Activated naive CD4-positive, alpha-beta T cell treated with anti-CD3 and anti-CD28 coated beads, Interleukin-2, amount 10 ng/mL, durations not matched to agents 7 days and 5 days (primary cell): ENCODE measurements at regions of chr3 and their contacts with region 1.

Region 1: DNA sequence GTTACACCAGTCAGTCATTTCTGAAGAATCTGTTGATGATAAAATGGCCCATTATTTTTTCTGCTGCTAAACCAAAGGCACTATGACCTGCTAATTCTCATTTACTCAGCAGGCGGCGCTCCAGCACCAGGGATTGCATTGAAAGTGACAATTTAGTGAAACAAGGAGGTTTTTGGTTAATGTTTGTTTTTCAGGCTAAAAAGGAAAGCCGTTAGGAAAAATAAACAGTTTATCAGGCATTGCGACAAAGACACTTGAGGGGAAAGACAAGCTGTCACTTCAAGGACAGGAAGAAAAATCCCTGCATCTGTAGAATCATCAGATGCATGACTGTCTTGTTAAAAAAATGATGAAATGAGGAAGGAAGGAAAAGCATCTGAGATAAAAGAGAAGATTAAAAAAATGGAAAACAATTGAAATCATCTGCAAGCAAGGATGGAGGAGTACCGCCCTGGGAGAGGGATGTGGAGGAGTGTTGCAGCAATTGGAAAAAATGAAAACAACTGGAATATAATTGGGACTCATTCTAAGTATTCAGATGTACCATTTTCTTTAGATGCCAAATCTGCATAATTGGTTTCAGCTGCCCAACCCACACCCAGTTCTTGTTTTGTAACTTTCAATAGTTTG is 54.0 kb downstream of the NR1D2 start:
- DNase-seq: peak; percentile 77
- H3K4me3 Mint-ChIP-seq: no peak overlapping the region
- H3K27ac Mint-ChIP-seq: no peak overlapping the region
- H3K4me1 Mint-ChIP-seq: no peaks in the 10 kb centered on the region
- H3K27me3 Mint-ChIP-seq: peaks cover 19% of the 10 kb centered on the region

Region 2: GRCh38 chr3:24088782-24089181 is 89.7 kb after region 1 on chr3:
- CTCF ChIA-PET with region 1: no interaction called
- DNase-seq: no peak
- H3K4me3 Mint-ChIP-seq: no peak overlapping the region
- H3K27ac Mint-ChIP-seq: no peak overlapping the region
- H3K4me1 Mint-ChIP-seq: no peaks in the 10 kb centered on the region
- H3K27me3 Mint-ChIP-seq: no peaks in the 10 kb centered on the region

Region 3: DNA sequence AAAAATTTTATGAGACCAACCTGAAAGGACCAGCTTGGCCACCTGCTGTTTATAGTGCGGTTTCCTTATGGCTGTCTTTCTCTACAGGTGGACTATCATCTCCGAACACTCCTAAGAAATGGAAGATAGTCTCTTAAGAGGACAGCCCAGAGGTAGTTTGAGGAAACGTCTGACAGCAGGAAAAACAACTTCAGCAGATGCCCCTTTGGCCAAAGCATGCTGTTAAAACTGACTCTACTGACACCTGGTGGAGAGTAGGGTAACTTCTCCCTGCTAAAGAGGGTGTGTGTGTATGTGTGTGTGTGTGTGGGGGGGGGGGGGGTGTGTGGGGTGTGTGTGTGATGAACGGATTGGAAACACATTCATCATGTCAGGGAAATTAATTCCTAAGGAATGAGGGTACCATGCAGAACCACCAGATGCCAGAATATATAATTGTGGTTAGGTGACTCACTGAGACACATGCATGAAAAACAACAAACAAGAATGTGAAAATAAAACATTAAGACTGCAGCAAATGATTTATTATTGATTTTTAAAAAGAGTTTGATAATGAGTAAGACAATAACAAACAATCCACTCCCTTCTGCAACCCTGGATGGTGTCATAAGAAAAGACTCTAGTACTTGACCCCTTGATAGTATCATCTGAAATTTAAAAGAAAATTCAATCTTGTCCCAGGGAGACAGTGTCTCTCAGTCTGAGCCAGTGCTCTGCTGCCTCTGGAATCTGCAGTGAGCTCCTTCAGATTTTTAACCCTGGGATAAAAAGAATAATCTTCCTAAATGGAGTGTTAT is 239.0 kb after region 1 on chr3:
- CTCF ChIA-PET with region 1: interaction called, 14 read pairs
- DNase-seq: peak; percentile 35
- H3K4me3 Mint-ChIP-seq: no peak overlapping the region
- H3K27ac Mint-ChIP-seq: no peak overlapping the region
- H3K4me1 Mint-ChIP-seq: no peaks in the 10 kb centered on the region
- H3K27me3 Mint-ChIP-seq: peaks cover 11% of the 10 kb centered on the region